ENCODE measurements at regions of chr2 and their contacts with region 1.

Region 1: DNA sequence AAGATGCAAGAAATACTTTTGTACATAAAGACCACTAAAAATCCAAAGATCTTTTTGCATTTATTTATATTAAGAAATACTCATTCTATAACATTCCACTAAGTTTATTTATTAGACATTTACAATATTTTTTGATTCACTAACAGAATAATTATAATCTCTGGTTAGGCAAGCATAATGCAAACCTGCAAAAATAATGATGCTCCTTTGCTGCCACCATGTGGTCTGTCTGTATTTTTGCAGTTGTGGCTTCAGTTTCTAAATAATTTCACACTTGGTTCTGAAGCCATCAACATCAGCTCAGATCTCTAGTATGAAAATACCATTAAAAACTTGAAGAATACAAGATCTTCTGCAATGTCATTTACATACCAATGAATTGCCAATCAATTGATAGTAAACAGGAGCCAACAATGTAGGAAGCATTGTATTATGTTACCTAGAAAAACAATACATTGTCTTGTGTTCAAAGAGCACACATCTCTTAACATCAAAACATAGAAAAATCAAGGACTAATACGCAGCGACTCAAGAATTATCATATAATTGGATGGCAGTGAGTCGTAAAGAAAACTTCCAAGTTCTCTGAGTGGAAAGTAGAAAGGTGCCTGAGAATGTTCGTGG is 28.8 kb upstream of the WDR75 start:
- DNase-seq: peak; percentile 24
- ATAC-seq: peak; percentile 69
- H3K4me3 ChIP-seq: no peak overlapping the region
- H3K27ac ChIP-seq: no peak overlapping the region
- H3K4me1 ChIP-seq: no peaks in the 10 kb centered on the region
- H3K27me3 ChIP-seq: no peaks in the 10 kb centered on the region
- CTCF ChIP-seq: peak; percentile 48 to 80 (median 77); a peak in 5 of 6 replicates
- POLR2A ChIP-seq: no peak
- RAD21 ChIP-seq: peak; percentile 84

Region 2: GRCh38 chr2:188524519-188525113 is 887.8 kb before region 1 on chr2:
- CTCF ChIA-PET with region 1: interaction called, 6 read pairs
- POLR2A ChIA-PET with region 1: no interaction called
- RAD21 ChIA-PET with region 1: no interaction called
- intact Hi-C with region 1: loop called (anchors 2 kb)
- DNase-seq: peak; percentile 22
- ATAC-seq: no peak
- H3K4me3 ChIP-seq: no peak overlapping the region
- H3K27ac ChIP-seq: no peak overlapping the region
- H3K4me1 ChIP-seq: no peaks in the 10 kb centered on the region
- H3K27me3 ChIP-seq: no peaks in the 10 kb centered on the region
- CTCF ChIP-seq: peak; percentile 54 to 64 (median 56); a peak in 5 of 6 replicates
- POLR2A ChIP-seq: no peak
- RAD21 ChIP-seq: peak; percentile 77

Region 3: DNA sequence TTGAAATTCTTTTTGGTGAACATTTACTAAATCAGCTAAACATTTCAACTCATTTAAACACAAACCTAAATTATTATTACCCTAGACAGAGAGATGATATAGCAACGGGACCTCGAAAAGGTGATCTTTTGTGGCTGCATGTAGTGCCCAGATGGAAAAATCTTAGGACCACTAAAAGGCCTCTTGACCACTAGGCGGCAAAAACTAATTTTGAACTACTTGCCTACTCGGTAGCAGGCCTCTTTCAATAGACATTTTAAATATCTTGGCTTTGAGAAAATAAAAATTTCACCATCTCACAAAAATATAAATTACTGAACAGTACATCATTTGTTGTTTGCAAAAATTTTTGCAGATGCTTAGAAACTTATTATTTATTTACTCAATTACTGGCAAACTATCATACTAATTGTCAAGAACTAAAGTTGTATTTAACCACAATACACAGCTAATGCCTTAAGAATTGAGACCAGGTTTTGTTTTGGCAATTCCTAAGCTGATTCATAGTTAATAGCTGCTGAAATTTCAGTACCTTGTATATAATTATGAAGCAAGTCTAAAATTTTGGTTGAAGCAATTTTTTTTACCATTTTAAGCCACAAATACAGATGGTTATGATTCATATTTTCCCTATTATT is 428.9 kb before region 1 on chr2:
- CTCF ChIA-PET with region 1: interaction called, 7 read pairs
- POLR2A ChIA-PET with region 1: no interaction called
- RAD21 ChIA-PET with region 1: no interaction called
- intact Hi-C with region 1: loop called (anchors 2 kb)
- DNase-seq: peak; percentile 34
- ATAC-seq: peak; percentile 63
- H3K4me3 ChIP-seq: no peak overlapping the region
- H3K27ac ChIP-seq: no peak overlapping the region
- H3K4me1 ChIP-seq: peaks cover 0 to 7% of the 10 kb centered on the region in 2 experiments; a peak in 1 of 4 replicates
- H3K27me3 ChIP-seq: no peaks in the 10 kb centered on the region
- CTCF ChIP-seq: peak; percentile 10 to 59 (median 44); a peak in 3 of 6 replicates
- POLR2A ChIP-seq: no peak
- RAD21 ChIP-seq: 0 out of 2 replicates have a peak, but pooled peaks have one; percentile 23

Region 4: GRCh38 chr2:189115126-189115525 is 297.3 kb before region 1 on chr2:
- CTCF ChIA-PET with region 1: interaction called, 3 read pairs
- POLR2A ChIA-PET with region 1: no interaction called
- RAD21 ChIA-PET with region 1: interaction called in 1 of 2 experiments, 3 read pairs
- intact Hi-C with region 1: loop called (anchors 1 kb)
- DNase-seq: peak; percentile 12
- ATAC-seq: no peak
- H3K4me3 ChIP-seq: no peak overlapping the region
- H3K27ac ChIP-seq: no peak overlapping the region
- H3K4me1 ChIP-seq: peaks cover 0 to 1% of the 10 kb centered on the region in 2 experiments; a peak in 2 of 4 replicates
- H3K27me3 ChIP-seq: no peaks in the 10 kb centered on the region
- CTCF ChIP-seq: peak in 1 of 3 experiments; percentile 48; a peak in 2 of 6 replicates
- POLR2A ChIP-seq: no peak
- RAD21 ChIP-seq: peak; percentile 65

Region 5: DNA sequence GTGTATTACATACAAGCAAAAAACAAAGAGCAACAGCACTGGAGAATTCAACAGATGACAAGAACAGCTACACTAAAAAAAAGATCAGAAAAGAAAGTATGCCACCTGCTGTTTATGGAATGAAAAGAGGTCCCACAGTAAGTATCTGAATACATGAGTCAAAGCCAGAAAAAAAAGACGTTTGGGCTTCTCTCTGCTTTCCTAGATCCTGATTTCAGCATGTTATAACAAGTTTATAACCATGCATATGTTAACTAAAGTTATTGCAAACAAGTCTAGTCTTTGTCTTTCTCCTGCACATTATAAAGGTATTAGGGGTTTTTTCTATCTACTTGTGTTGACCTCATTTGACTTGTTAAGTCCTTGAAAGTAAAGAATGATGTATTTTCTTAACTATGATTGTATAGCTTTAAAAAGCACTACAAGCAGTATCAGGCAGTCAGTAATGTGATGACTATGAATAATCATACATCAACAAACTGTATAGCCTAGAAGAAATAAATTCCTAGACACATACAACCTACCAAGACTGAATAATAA is 124.4 kb before region 1 on chr2:
- CTCF ChIA-PET with region 1: no interaction called
- POLR2A ChIA-PET with region 1: no interaction called
- RAD21 ChIA-PET with region 1: no interaction called
- intact Hi-C with region 1: loop called (anchors 5 kb)
- DNase-seq: peak; percentile 34
- ATAC-seq: peak; percentile 76
- H3K4me3 ChIP-seq: no peak overlapping the region
- H3K27ac ChIP-seq: no peak overlapping the region
- H3K4me1 ChIP-seq: no peaks in the 10 kb centered on the region
- H3K27me3 ChIP-seq: no peaks in the 10 kb centered on the region
- CTCF ChIP-seq: peak; percentile 38 to 89 (median 57); a peak in 5 of 6 replicates
- POLR2A ChIP-seq: no peak
- RAD21 ChIP-seq: peak; percentile 82